SK-N-SH (cell line): ENCODE measurements at regions of chr22 and their contacts with region 1.

Region 1: GRCh38 chr22:29359469-29359868 is 28.9 kb downstream of the AP1B1 start:
- DNase-seq: peak; percentile 81
- H3K4me3 ChIP-seq: no peak overlapping the region; a peak in 1 of 4 replicates
- H3K27ac ChIP-seq: no peak overlapping the region
- H3K4me1 ChIP-seq: peaks cover 0 to 4% of the 10 kb centered on the region in 2 experiments; a peak in 1 of 4 replicates
- H3K27me3 ChIP-seq: no peaks in the 10 kb centered on the region
- CTCF ChIP-seq: peak; percentile 70
- EP300 ChIP-seq: no peak
- RAD21 ChIP-seq: peak; percentile 83

Region 2: GRCh38 chr22:29313121-29313580 is 46.3 kb before region 1 on chr22:
- CTCF ChIA-PET with region 1: interaction called, 20 read pairs
- POLR2A ChIA-PET with region 1: no interaction called
- DNase-seq: peak; percentile 86
- H3K4me3 ChIP-seq: no peak overlapping the region
- H3K27ac ChIP-seq: no peak overlapping the region
- H3K4me1 ChIP-seq: peaks cover 18 to 27% of the 10 kb centered on the region in 2 experiments; a peak in 3 of 4 replicates
- H3K27me3 ChIP-seq: peaks cover 21% of the 10 kb centered on the region
- CTCF ChIP-seq: peak; percentile 69
- EP300 ChIP-seq: no peak
- RAD21 ChIP-seq: no peak

Region 3: DNA sequence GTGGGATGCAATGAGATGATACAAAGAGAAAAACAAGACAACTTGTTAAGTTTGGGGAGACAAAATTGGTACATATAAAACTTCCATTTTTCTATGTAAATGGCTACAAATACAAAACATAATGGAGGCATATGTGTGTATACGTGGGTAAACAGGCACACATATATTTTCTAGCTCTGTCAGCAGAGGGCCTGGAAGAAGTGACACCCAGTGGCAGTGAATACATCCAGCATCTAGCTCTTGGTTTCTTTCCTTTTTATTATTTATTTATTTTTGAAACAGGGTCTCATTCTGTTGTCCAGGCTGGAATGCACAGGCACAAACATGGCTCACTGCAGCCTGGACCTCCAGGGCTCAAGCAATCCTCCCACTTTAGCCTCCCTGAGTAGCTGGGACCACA is 38.9 kb before region 1 on chr22:
- CTCF ChIA-PET with region 1: interaction called, 11 read pairs
- POLR2A ChIA-PET with region 1: no interaction called
- DNase-seq: no peak
- H3K4me3 ChIP-seq: no peak overlapping the region
- H3K27ac ChIP-seq: no peak overlapping the region
- H3K4me1 ChIP-seq: no peaks in the 10 kb centered on the region
- H3K27me3 ChIP-seq: peaks cover 8% of the 10 kb centered on the region; the same call in 1 of the 2 replicates
- CTCF ChIP-seq: peak; percentile 38
- EP300 ChIP-seq: no peak
- RAD21 ChIP-seq: peak; percentile 38

Region 4: DNA sequence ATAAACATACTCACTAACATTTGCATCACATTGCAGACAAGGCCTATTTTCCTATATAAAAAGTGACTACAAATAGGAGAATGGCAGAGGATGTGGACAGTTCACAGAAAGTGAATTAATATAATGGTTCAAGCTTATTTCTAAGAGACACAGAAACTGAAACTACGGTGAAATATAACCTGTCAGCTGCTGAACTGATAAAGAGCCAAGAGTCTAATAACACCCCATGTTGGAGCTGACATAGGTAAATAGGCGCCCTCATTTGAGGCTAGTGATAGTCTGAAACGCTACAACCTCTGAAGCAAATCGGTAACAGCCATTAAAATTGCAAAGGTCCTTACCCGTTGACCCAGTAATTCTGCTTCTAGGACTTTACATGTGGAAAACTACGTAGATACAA is 14.9 kb after region 1 on chr22:
- CTCF ChIA-PET with region 1: no interaction called
- POLR2A ChIA-PET with region 1: no interaction called
- DNase-seq: no peak
- H3K4me3 ChIP-seq: no peak overlapping the region
- H3K27ac ChIP-seq: no peak overlapping the region
- H3K4me1 ChIP-seq: peaks cover 0 to 3% of the 10 kb centered on the region in 2 experiments; a peak in 2 of 4 replicates
- H3K27me3 ChIP-seq: no peaks in the 10 kb centered on the region
- CTCF ChIP-seq: no peak
- EP300 ChIP-seq: no peak
- RAD21 ChIP-seq: no peak